ENCODE measurements at regions of chr6 and their contacts with region 1.

Region 1: GRCh38 chr6:43723737-43724295 is 36.2 kb upstream of the MRPS18A start:
- DNase-seq: no peak
- ATAC-seq: peak; percentile 88
- H3K4me3 ChIP-seq: no peak overlapping the region
- H3K27ac ChIP-seq: no peak overlapping the region
- H3K4me1 ChIP-seq: peaks cover 24% of the 10 kb centered on the region
- H3K27me3 ChIP-seq: no peaks in the 10 kb centered on the region
- CTCF ChIP-seq: peak; percentile 76 to 93 (median 81)
- EP300 ChIP-seq: no peak
- POLR2A ChIP-seq: no peak
- RAD21 ChIP-seq: peak; percentile 82

Region 2: GRCh38 chr6:43687437-43688347 is 36.1 kb before region 1 on chr6 and contains the start of gene MRPS18A:
- CTCF ChIA-PET with region 1: interaction called, 10 read pairs
- POLR2A ChIA-PET with region 1: interaction called, 4 read pairs
- RAD21 ChIA-PET with region 1: interaction called, 6 read pairs
- SMC1A ChIA-PET with region 1: interaction called, 3 read pairs
- in situ Hi-C with region 1: no loop called
- intact Hi-C with region 1: no loop called
- DNase-seq: no peak
- ATAC-seq: peak; percentile 98
- H3K4me3 ChIP-seq: peak within 1 kb of the TSS; percentile 98
- H3K27ac ChIP-seq: peak within 1 kb of the TSS; percentile 86
- H3K4me1 ChIP-seq: peaks cover 18% of the 10 kb centered on the region
- H3K27me3 ChIP-seq: no peaks in the 10 kb centered on the region
- CTCF ChIP-seq: no peak
- EP300 ChIP-seq: no peak
- POLR2A ChIP-seq: peak; percentile 89
- RAD21 ChIP-seq: no peak
- polyA plus RNA-seq, gene MRPS18A: 105 to 158 TPM

Region 3: DNA sequence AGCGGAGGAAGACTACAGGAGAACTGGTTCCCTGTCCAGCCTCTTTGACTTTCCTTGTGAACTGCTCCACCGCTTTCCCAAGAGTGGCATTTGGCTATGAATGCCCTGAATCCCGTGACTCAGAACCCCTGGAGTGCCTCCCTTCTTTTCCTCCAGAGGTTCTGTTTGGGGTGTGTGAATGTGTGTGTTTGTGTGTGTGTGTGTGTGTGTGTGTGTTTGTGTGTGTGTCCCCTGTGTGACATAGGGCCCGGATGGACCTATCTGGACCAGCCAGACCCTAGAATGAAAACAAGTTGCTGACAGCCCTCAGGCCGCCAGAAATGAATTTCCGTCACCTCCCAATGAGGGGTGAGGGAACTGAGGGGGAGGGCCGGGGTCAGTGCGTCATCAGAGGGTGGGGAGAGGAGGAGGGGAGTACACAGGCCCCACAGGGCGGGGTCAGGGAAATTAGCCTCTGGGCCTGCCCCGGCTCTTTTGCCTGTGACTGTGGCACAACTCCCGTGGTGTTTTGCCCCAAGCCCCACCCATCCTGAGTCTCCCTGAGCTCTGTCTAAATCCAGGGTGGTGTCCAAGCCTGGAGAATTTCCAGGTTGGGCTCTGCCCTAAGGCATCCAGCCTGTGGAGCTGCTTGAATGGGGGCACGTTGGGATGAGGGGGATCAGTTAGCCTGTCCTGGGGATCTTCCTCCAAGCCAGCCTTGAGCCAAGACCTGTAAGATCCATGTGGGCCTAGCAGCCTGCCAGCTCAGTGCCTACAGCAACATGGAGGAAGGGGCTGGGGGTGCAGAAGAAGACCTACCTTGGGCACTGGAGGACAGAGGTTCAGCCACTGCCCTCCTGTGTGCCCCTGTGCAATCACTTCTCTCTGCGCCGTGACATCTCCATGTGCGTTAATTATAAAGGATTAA is 21.0 kb before region 1 on chr6:
- CTCF ChIA-PET with region 1: interaction called, 15 read pairs
- POLR2A ChIA-PET with region 1: interaction called, 4 read pairs
- RAD21 ChIA-PET with region 1: interaction called, 6 read pairs
- SMC1A ChIA-PET with region 1: interaction called, 5 read pairs
- in situ Hi-C with region 1: no loop called
- intact Hi-C with region 1: no loop called
- DNase-seq: no peak
- ATAC-seq: peak; percentile 54
- H3K4me3 ChIP-seq: no peak overlapping the region
- H3K27ac ChIP-seq: no peak overlapping the region
- H3K4me1 ChIP-seq: peaks cover 36% of the 10 kb centered on the region
- H3K27me3 ChIP-seq: no peaks in the 10 kb centered on the region
- CTCF ChIP-seq: no peak
- EP300 ChIP-seq: no peak
- POLR2A ChIP-seq: no peak
- RAD21 ChIP-seq: no peak

Region 4: GRCh38 chr6:43758617-43759050 is 34.8 kb after region 1 on chr6:
- CTCF ChIA-PET with region 1: interaction called, 41 read pairs
- POLR2A ChIA-PET with region 1: interaction called, 5 read pairs
- RAD21 ChIA-PET with region 1: interaction called, 9 read pairs
- SMC1A ChIA-PET with region 1: interaction called, 8 read pairs
- in situ Hi-C with region 1: no loop called
- intact Hi-C with region 1: loop called (anchors 5 kb)
- DNase-seq: no peak
- ATAC-seq: peak; percentile 85
- H3K4me3 ChIP-seq: no peak overlapping the region
- H3K27ac ChIP-seq: no peak overlapping the region
- H3K4me1 ChIP-seq: peaks cover 10% of the 10 kb centered on the region
- H3K27me3 ChIP-seq: no peaks in the 10 kb centered on the region
- CTCF ChIP-seq: peak; percentile 67 to 88 (median 84)
- EP300 ChIP-seq: no peak
- POLR2A ChIP-seq: no peak
- RAD21 ChIP-seq: peak; percentile 62

Region 5: GRCh38 chr6:43764721-43765120 is 40.9 kb after region 1 on chr6:
- CTCF ChIA-PET with region 1: interaction called, 39 read pairs
- POLR2A ChIA-PET with region 1: interaction called, 13 read pairs
- RAD21 ChIA-PET with region 1: interaction called, 20 read pairs
- SMC1A ChIA-PET with region 1: interaction called, 31 read pairs
- in situ Hi-C with region 1: no loop called
- intact Hi-C with region 1: loop called (anchors 1 kb)
- DNase-seq: no peak
- ATAC-seq: no peak
- H3K4me3 ChIP-seq: no peak overlapping the region
- H3K27ac ChIP-seq: no peak overlapping the region
- H3K4me1 ChIP-seq: peaks cover 5% of the 10 kb centered on the region
- H3K27me3 ChIP-seq: no peaks in the 10 kb centered on the region
- CTCF ChIP-seq: no peak
- EP300 ChIP-seq: no peak
- POLR2A ChIP-seq: no peak
- RAD21 ChIP-seq: no peak

Region 6: DNA sequence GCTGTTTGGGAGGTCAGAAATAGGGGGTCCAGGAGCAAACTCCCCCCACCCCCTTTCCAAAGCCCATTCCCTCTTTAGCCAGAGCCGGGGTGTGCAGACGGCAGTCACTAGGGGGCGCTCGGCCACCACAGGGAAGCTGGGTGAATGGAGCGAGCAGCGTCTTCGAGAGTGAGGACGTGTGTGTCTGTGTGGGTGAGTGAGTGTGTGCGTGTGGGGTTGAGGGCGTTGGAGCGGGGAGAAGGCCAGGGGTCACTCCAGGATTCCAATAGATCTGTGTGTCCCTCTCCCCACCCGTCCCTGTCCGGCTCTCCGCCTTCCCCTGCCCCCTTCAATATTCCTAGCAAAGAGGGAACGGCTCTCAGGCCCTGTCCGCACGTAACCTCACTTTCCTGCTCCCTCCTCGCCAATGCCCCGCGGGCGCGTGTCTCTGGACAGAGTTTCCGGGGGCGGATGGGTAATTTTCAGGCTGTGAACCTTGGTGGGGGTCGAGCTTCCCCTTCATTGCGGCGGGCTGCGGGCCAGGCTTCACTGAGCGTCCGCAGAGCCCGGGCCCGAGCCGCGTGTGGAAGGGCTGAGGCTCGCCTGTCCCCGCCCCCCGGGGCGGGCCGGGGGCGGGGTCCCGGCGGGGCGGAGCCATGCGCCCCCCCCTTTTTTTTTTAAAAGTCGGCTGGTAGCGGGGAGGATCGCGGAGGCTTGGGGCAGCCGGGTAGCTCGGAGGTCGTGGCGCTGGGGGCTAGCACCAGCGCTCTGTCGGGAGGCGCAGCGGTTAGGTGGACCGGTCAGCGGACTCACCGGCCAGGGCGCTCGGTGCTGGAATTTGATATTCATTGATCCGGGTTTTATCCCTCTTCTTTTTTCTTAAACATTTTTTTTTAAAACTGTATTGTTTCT is 46.0 kb after region 1 on chr6 and contains the start of gene VEGFA:
- CTCF ChIA-PET with region 1: interaction called, 39 read pairs
- POLR2A ChIA-PET with region 1: interaction called, 13 read pairs
- RAD21 ChIA-PET with region 1: interaction called, 23 read pairs
- SMC1A ChIA-PET with region 1: interaction called, 31 read pairs
- in situ Hi-C with region 1: no loop called
- intact Hi-C with region 1: loop called (anchors 1 kb)
- DNase-seq: peak; percentile 64
- ATAC-seq: peak; percentile 68
- H3K4me3 ChIP-seq: peak within 1 kb of the TSS; percentile 98
- H3K27ac ChIP-seq: peak within 1 kb of the TSS; percentile 88
- H3K4me1 ChIP-seq: peaks cover 14% of the 10 kb centered on the region
- H3K27me3 ChIP-seq: no peaks in the 10 kb centered on the region
- CTCF ChIP-seq: peak; percentile 97 to 99 (median 98)
- EP300 ChIP-seq: no peak
- POLR2A ChIP-seq: peak; percentile 90
- RAD21 ChIP-seq: peak; percentile 98
- polyA plus RNA-seq, gene VEGFA: 2.9 to 4.3 TPM

Region 7: DNA sequence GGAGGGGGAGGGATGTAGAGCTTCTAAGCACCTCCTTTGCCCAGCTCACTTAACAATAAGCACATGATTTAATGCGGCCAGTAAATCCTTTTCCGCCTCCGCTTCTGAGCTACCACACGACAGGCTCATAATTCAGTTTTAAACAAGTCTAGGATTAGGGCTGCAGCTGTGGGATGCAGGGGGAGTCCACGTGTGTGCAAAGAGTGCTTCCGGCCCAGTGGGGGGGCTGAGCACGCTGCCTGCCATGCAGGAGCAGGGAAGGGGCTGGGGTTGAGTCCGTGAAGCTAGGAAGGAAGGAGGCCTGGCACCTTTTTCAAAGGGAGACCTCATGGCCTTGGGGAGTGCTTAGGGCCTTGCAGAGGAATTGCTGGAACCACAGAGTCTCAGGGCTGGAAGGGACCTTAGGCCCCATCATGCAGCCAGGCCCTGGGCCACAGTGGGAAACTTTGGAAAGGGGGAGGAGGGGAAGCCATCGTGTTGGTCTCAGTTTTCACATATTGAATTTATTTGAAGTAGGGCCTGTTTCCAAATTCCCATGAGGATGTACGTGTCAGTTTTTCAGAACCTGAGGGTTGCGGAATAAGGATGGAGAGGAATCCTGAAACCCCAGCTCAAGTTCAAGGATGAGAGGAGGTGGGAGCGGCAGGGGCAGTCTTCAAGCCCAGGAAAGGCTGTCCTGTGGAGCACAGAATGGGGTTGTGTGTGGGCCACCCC is 142.3 kb after region 1 on chr6:
- CTCF ChIA-PET with region 1: no interaction called
- POLR2A ChIA-PET with region 1: no interaction called
- RAD21 ChIA-PET with region 1: no interaction called
- SMC1A ChIA-PET with region 1: no interaction called
- in situ Hi-C with region 1: no loop called
- intact Hi-C with region 1: no loop called
- DNase-seq: no peak
- ATAC-seq: no peak
- H3K4me3 ChIP-seq: no peak overlapping the region
- H3K27ac ChIP-seq: no peak overlapping the region
- H3K4me1 ChIP-seq: no peaks in the 10 kb centered on the region
- H3K27me3 ChIP-seq: peaks cover 0 to 3% of the 10 kb centered on the region in 2 experiments; a peak in 1 of 4 replicates
- CTCF ChIP-seq: no peak
- EP300 ChIP-seq: no peak
- POLR2A ChIP-seq: no peak
- RAD21 ChIP-seq: no peak